ENCODE measurements at regions of chr17 and their contacts with region 1.

Region 1: DNA sequence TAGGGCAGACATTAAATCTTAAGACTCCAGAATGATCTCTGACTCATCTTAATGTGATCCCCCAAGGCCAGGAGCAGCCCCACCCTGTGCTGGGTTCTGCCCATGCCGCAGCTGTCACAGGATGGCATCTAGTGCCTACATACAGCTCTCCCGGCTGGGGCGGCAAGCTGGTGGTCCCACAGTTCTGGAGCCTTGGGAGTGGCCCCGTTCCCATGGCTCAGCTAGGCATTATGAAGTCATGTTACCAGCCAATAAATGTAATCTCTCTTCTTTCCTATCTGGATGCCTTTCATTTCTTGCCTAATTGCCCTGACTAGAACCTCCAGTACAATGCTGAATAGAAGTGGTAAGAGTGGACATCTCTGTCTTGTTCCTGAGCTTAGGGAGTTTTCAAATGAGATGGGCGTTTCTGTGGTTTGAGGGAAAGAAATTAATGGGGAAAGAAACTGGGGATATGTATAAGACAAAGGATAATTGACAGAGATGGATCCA is 95.7 kb upstream of the DNAH17 start:
- DNase-seq: no peak
- ATAC-seq: no peak
- H3K4me3 ChIP-seq: no peak overlapping the region
- H3K27ac ChIP-seq: no peak overlapping the region
- H3K4me1 ChIP-seq: peaks cover 0 to 3% (median 0%) of the 10 kb centered on the region in 9 donors
- H3K27me3 ChIP-seq: no peaks in the 10 kb centered on the region
- CTCF ChIP-seq: no peak

Region 2: GRCh38 chr17:78689029-78689428 is 16.1 kb after region 1 on chr17:
- intact Hi-C with region 1: loop called in 1 of 10 experiments (anchors 2 kb)
- DNase-seq: no peak
- ATAC-seq: no peak
- H3K4me3 ChIP-seq: no peak overlapping the region
- H3K27ac ChIP-seq: no peak overlapping the region
- H3K4me1 ChIP-seq: peaks cover 0 to 4% (median 0%) of the 10 kb centered on the region in 9 donors
- H3K27me3 ChIP-seq: no peaks in the 10 kb centered on the region
- CTCF ChIP-seq: peak in 1 of 9 donors; percentile 18

Region 3: DNA sequence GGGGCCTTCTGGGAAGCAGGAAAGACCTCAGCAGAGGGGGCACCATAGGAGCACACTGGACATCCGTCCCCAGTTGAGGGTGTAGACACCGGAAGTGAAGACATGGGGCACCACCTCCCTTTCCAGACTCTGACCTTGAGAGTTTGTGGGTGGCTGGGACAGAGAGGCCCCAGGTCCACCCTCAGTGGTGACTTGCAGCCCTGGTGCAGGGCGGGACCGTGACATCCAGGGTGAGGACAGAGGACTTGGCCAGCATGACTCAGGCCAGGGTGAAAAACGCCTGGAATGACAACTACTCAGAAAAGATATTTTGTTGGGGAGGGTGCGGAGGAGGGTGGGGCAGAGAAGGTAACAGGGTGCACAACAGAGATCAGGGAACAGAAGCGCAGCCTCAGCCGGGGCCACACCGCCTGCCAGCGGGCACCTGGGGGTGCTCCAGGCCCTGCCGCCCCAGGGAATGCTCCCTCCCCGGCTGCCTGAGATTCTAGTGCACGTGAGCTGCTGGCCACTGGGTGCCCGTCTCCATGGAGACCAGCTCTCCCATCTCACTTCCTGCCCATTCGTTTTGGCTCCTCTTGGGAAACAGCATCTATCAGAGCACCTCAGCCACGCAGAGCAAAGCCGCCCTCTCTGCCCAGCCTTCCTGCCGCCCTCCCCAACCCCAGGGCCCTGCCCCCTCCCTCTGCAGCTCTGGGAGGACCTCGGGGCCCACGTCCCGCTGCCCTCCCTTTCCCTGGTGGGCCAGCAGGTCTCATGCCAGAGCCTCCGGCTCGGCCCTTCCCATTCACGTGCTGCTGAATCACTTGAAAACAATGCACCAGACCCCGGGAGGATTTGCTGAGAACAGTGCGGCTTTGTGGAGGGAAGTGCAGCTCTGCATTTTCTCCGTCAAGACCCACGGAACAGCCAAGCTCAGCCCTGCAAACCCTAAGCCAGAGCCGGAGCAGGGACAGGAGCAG is 210.5 kb after region 1 on chr17:
- intact Hi-C with region 1: no loop called
- DNase-seq: peak; percentile 77 to 85
- ATAC-seq: peak; percentile 59 to 80 (median 72)
- H3K4me3 ChIP-seq: peak overlapping the region in 9 of 10 donors; percentile 14 to 44 (median 36)
- H3K27ac ChIP-seq: peak overlapping the region; percentile 91 to 98 (median 96)
- H3K4me1 ChIP-seq: peaks cover 29 to 84% (median 73%) of the 10 kb centered on the region in 9 donors
- H3K27me3 ChIP-seq: no peaks in the 10 kb centered on the region
- CTCF ChIP-seq: no peak

Measured in heart right ventricle (tissue), 16 donors.